Endothelial cell of umbilical vein (primary cell): ENCODE measurements at regions of chr13 and their contacts with region 1.

Region 1: GRCh38 chr13:56755181-56755940 is 385.4 kb upstream of the PRR20A start:
- DNase-seq: peak; percentile 84
- H3K4me3 ChIP-seq: no peak overlapping the region
- H3K27ac ChIP-seq: peak overlapping the region; percentile 7
- H3K4me1 ChIP-seq: peaks cover 4% of the 10 kb centered on the region
- H3K27me3 ChIP-seq: no peaks in the 10 kb centered on the region
- CTCF ChIP-seq: peak; percentile 37 to 51
- POLR2A ChIP-seq: no peak

Region 2: DNA sequence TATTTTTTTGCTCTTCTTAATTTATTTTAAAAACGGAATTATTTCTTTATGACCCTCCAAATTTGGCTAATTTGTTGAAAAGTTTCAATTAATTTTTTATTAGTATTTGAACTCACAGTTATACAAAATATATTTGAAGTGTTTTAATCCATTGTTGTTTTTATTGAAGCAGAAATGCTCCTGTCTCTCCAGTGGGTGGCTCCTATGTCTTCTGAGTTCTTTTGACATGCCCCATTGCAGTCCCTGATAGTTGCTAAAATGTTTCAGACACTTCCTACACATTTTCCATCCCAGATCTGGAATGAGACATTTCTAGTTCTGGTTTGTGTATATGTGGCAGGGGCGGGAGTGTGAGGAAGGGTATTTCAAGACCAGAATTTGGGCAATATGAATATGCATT is 194.0 kb before region 1 on chr13:
- CTCF ChIA-PET with region 1: no interaction called
- POLR2A ChIA-PET with region 1: no interaction called
- dilution Hi-C with region 1: no loop called
- intact Hi-C with region 1: loop called (anchors 10 kb)
- DNase-seq: peak; percentile 35
- H3K4me3 ChIP-seq: no peak overlapping the region
- H3K27ac ChIP-seq: no peak overlapping the region
- H3K4me1 ChIP-seq: no peaks in the 10 kb centered on the region
- H3K27me3 ChIP-seq: no peaks in the 10 kb centered on the region
- CTCF ChIP-seq: peak; percentile 20 to 39
- POLR2A ChIP-seq: no peak

Region 3: GRCh38 chr13:56861472-56861871 is 106.1 kb after region 1 on chr13:
- CTCF ChIA-PET with region 1: no interaction called
- POLR2A ChIA-PET with region 1: no interaction called
- dilution Hi-C with region 1: no loop called
- intact Hi-C with region 1: loop called (anchors 5 kb)
- DNase-seq: peak; percentile 91
- H3K4me3 ChIP-seq: no peak overlapping the region
- H3K27ac ChIP-seq: peak overlapping the region; percentile 78
- H3K4me1 ChIP-seq: peaks cover 48% of the 10 kb centered on the region
- H3K27me3 ChIP-seq: no peaks in the 10 kb centered on the region
- CTCF ChIP-seq: no peak
- POLR2A ChIP-seq: no peak